ENCODE measurements at regions of chr12 and their contacts with region 1.

Region 1: DNA sequence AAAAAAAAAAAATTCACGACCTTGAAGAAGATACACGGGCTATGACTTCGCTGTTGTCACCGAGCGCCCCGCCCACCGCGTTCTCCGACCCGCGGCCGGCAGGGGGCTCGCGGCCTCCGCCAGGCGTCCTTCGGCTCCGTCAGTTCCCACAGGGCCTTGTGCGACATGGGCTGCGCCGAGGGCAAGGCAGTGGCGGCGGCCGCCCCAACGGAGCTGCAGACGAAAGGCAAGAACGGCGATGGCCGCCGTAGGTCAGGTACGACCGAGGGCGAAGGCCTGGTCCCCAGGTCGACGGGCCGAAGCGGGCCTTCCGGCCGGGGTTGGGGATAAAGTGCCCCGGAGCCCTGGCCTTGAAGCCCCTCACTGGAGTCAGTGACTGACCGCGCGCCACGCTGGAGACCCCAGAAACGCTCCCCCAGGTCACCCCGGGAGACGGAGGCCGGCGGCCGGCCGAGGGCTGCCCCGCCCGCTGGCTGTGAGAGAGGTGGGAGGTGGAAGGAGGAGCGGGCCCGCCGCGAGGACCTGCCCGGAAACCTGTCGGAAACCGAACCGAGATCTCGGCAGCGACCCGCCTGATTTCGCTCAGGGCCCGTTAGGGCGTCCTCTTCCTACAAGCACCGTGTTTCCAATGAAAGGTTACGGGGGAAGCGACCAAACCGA is at the start of gene TXNRD1:
- DNase-seq: peak; percentile 93 to 94
- ATAC-seq: peak; percentile 73 to 77
- H3K4me3 ChIP-seq: peak within 1 kb of the TSS; percentile 76
- H3K27ac ChIP-seq: peak within 1 kb of the TSS; percentile 95 to 98
- H3K4me1 ChIP-seq: peaks cover 46% of the 10 kb centered on the region
- CTCF ChIP-seq: peak; percentile 87
- EP300 ChIP-seq: no peak
- POLR2A ChIP-seq: peak; percentile 82
- RAD21 ChIP-seq: peak; percentile 90 to 96
- polyA plus RNA-seq, gene TXNRD1: 1,230 and 1,348 TPM in 2 replicates

Region 2: GRCh38 chr12:104177663-104178501 is 37.9 kb before region 1 on chr12:
- CTCF ChIA-PET with region 1: interaction called, 12 read pairs
- POLR2A ChIA-PET with region 1: interaction called, 12 read pairs
- DNase-seq: peak; percentile 81 to 95
- ATAC-seq: peak; percentile 89 to 92
- H3K4me3 ChIP-seq: no peak overlapping the region; the same call in 2 of the 3 replicates
- H3K27ac ChIP-seq: peak overlapping the region; percentile 85 to 89
- H3K4me1 ChIP-seq: peaks cover 74% of the 10 kb centered on the region
- CTCF ChIP-seq: peak; percentile 70
- EP300 ChIP-seq: peak; percentile 78 to 95
- POLR2A ChIP-seq: no peak
- RAD21 ChIP-seq: peak; percentile 85 to 87

Region 3: DNA sequence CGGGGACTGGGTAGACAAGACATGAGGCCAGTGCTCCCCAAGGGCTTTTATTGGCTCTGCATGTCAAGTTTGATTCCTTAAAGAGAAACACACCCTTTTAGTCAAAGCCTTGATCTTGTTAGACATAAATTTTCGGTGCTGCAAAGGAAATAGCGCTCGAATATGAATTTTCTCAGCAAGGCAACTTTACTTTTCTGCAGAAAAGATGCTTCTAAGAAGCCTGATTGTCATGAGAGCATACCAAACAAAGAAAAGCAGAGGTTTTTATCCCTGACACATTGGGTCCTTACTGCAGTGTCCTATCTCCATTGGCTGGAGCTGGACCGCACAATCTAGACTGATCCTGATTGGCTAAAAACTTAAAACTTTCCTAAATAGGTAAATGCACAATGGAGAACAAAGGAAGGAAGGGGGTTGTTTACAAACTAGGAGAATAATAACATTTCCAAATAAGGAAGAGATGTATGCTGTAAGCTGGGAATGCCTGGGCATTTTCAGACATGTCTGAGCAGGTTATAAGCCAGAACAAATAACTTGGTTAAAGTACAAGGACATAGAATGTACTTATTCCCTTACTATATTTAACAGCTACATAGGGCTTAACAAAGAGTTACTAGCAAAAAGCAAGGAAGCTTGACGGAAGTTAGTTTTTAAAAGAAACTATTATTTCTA is 17.0 kb after region 1 on chr12:
- CTCF ChIA-PET with region 1: interaction called, 10 read pairs
- POLR2A ChIA-PET with region 1: no interaction called
- DNase-seq: no peak
- ATAC-seq: no peak
- H3K4me3 ChIP-seq: no peak overlapping the region
- H3K27ac ChIP-seq: no peak overlapping the region
- H3K4me1 ChIP-seq: no peaks in the 10 kb centered on the region
- CTCF ChIP-seq: no peak
- EP300 ChIP-seq: no peak
- POLR2A ChIP-seq: no peak
- RAD21 ChIP-seq: no peak

Region 4: GRCh38 chr12:104276273-104277131 is 60.7 kb after region 1 on chr12:
- CTCF ChIA-PET with region 1: interaction called, 15 read pairs
- POLR2A ChIA-PET with region 1: interaction called, 7 read pairs
- DNase-seq: peak in 1 of 2 experiments; percentile 64
- ATAC-seq: peak; percentile 25 to 32; a peak in 4 of 6 replicates
- H3K4me3 ChIP-seq: peak overlapping the region; percentile 25
- H3K27ac ChIP-seq: peak overlapping the region; percentile 85 to 98
- H3K4me1 ChIP-seq: peaks cover 72% of the 10 kb centered on the region
- CTCF ChIP-seq: no peak
- EP300 ChIP-seq: no peak
- POLR2A ChIP-seq: no peak
- RAD21 ChIP-seq: no peak

Region 5: GRCh38 chr12:104286538-104287482 is 71.0 kb after region 1 on chr12:
- CTCF ChIA-PET with region 1: interaction called, 155 read pairs
- POLR2A ChIA-PET with region 1: interaction called, 190 read pairs
- DNase-seq: peak; percentile 83 to 99
- ATAC-seq: peak; percentile 63 to 76
- H3K4me3 ChIP-seq: peak overlapping the region; percentile 68
- H3K27ac ChIP-seq: peak overlapping the region; percentile 94 to 98
- H3K4me1 ChIP-seq: peaks cover 42% of the 10 kb centered on the region
- CTCF ChIP-seq: no peak
- EP300 ChIP-seq: peak; percentile 51 to 88; a peak in 4 of 5 replicates
- POLR2A ChIP-seq: peak; percentile 81
- RAD21 ChIP-seq: peak; percentile 2 to 8; a peak in 1 of 5 replicates

Region 6: GRCh38 chr12:104294845-104295688 is 79.3 kb after region 1 on chr12:
- CTCF ChIA-PET with region 1: interaction called, 155 read pairs
- POLR2A ChIA-PET with region 1: interaction called, 190 read pairs
- DNase-seq: peak in 1 of 2 experiments; percentile 53
- ATAC-seq: peak; percentile 8 to 23
- H3K4me3 ChIP-seq: peak overlapping the region; percentile 68
- H3K27ac ChIP-seq: peak overlapping the region; percentile 94 to 98
- H3K4me1 ChIP-seq: peaks cover 75% of the 10 kb centered on the region
- CTCF ChIP-seq: no peak
- EP300 ChIP-seq: no peak
- POLR2A ChIP-seq: no peak
- RAD21 ChIP-seq: no peak

Region 7: DNA sequence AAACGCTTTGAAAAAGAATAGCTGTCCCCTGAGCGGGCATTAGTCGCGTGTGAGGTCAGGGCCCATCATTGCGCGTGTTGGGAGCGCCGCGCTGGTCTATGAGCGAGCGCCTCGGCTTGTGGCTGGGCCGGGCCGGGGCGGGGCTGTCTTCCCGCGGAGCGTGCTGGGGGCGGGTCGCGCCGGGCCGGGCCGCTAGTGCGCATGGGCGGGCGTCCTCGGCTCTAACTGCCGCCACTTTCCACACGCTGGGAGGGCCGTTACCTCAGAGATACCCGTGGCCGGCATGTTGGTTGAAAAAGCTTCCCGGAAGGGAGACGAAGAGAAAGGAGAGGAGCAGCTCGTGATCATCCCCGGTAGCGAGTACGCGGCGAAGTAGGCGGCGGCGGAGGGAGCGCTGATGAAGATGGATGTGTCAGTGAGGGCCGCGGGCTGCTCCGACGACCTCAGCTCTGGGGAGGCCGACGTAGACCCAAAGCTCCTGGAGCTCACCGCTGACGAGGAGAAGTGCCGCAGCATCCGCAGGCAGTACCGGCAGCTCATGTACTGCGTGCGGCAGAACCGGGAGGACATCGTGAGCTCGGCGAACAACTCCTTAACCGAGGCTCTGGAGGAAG is 87.9 kb after region 1 on chr12 and contains the start of gene EID3:
- CTCF ChIA-PET with region 1: interaction called, 21 read pairs
- POLR2A ChIA-PET with region 1: interaction called, 28 read pairs
- DNase-seq: peak; percentile 53 to 90
- ATAC-seq: peak; percentile 56 to 58
- H3K4me3 ChIP-seq: peak within 1 kb of the TSS; percentile 68
- H3K27ac ChIP-seq: peak within 1 kb of the TSS; percentile 73 to 98
- H3K4me1 ChIP-seq: peaks cover 81% of the 10 kb centered on the region
- CTCF ChIP-seq: no peak
- EP300 ChIP-seq: no peak
- POLR2A ChIP-seq: no peak
- RAD21 ChIP-seq: no peak
- polyA plus RNA-seq, gene EID3: 9.3 and 12.2 TPM in 2 replicates

Region 8: GRCh38 chr12:104680066-104680465 is 464.3 kb after region 1 on chr12:
- CTCF ChIA-PET with region 1: no interaction called
- POLR2A ChIA-PET with region 1: no interaction called
- DNase-seq: peak in 1 of 2 experiments; percentile 50
- ATAC-seq: peak; percentile 60 to 75; a peak in 3 of 6 replicates
- H3K4me3 ChIP-seq: no peak overlapping the region
- H3K27ac ChIP-seq: peak overlapping the region in 1 of 2 experiments; percentile 35; a peak in 3 of 6 replicates
- H3K4me1 ChIP-seq: 0 out of 3 replicates have a peak, but pooled peaks cover 4% of the 10 kb centered on the region
- CTCF ChIP-seq: peak; percentile 33
- EP300 ChIP-seq: no peak
- POLR2A ChIP-seq: no peak
- RAD21 ChIP-seq: peak; percentile 56 to 67